ENCODE measurements at regions of chr5 and their contacts with region 1.

Region 1: DNA sequence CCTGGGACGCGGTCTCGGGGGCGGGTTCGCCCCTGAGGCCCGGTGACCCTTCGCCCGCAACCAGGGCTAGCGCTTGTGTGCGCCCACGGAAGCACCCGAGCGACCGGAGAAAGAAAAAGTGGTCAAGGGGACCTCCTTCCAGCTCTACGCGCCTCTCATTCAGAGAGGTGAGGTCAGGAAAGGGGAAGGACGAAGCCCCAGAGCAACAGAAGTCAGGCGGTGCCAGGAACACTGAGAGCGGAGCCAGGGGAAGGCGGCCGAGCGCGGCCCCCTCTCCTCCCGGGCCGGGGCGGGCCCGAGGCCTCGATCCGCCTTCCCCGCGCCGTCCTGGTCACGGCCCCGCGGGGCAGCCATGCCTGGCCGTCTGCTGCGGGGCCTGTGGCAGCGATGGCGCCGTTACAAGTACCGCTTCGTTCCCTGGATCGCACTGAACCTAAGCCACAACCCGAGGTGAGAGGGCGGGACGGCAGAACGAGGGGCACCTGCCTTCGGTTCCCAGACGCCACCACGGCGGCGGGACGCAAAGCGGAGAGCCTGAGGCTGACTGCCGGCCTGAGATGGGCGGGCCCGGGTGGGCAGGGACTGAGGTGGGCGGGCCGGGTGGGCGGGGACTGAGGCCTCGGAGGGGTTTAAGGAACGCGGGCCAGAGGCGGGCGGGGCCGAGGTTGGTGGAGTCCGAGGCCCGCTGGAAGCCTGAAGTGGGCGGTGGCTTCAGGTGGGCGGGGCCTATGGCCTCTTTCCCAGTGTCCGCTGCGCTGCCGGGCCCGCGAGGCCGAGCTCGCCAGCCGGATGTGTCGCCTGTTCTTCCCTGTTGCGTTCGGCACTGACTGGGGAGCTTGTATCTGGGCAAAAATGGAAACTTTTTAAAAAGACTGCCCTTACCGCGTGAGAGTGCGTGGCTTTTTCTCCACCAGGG is at the start of gene SETD9:
- DNase-seq: peak; percentile 99 to 100
- H3K4me3 ChIP-seq: peak within 1 kb of the TSS; percentile 54 to 63 (median 58)
- H3K27ac ChIP-seq: peak within 1 kb of the TSS; percentile 89 to 96 (median 94)
- H3K4me1 ChIP-seq: peaks cover 0 to 4% of the 10 kb centered on the region in 2 donors
- H3K27me3 ChIP-seq: no peaks in the 10 kb centered on the region
- CTCF ChIP-seq: no peak
- POLR2A ChIP-seq: peak in 1 of 2 donors; percentile 84
- total RNA-seq, gene SETD9: 11.2 to 20.3 (median 14.3) TPM

Region 2: DNA sequence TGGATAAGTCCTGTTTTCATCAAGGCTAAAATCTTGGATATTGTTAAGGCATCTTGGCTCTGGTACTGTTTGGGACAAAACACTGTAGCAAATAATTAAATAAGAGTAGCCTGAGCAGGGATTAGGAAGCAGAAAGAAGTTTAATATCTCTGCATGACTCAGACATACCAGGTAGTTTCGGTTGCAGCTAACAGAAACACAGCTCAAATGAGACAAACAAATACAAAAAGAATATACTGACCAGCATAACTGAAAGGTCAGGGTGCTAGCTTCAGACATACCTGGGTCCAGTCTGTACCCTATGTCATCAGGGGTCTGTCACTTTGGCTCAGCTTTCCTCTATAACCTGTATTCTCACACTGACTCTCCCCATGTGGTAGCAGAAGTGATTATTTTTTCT is 250.6 kb before region 1 on chr5:
- intact Hi-C with region 1: no loop called
- DNase-seq: no peak
- H3K4me3 ChIP-seq: no peak overlapping the region
- H3K27ac ChIP-seq: no peak overlapping the region
- H3K4me1 ChIP-seq: peaks cover 9 to 16% of the 10 kb centered on the region in 2 donors
- H3K27me3 ChIP-seq: no peaks in the 10 kb centered on the region
- CTCF ChIP-seq: no peak
- POLR2A ChIP-seq: no peak

Region 3: GRCh38 chr5:57173185-57174127 is 263.9 kb after region 1 on chr5 and contains the start of gene GPBP1:
- intact Hi-C with region 1: loop called (anchors 10 kb)
- DNase-seq: peak; percentile 99 to 100
- H3K4me3 ChIP-seq: peak within 1 kb of the TSS; percentile 89 to 95 (median 92)
- H3K27ac ChIP-seq: peak within 1 kb of the TSS; percentile 99 to 100 (median 99)
- H3K4me1 ChIP-seq: peaks cover 16 to 20% of the 10 kb centered on the region in 2 donors
- H3K27me3 ChIP-seq: no peaks in the 10 kb centered on the region
- CTCF ChIP-seq: no peak
- POLR2A ChIP-seq: peak in 1 of 2 donors; percentile 82
- total RNA-seq, gene GPBP1: 89.4 to 109 (median 99.4) TPM

Region 4: GRCh38 chr5:57221049-57221568 is 311.6 kb after region 1 on chr5:
- intact Hi-C with region 1: loop called (anchors 10 kb)
- DNase-seq: no peak
- H3K4me3 ChIP-seq: no peak overlapping the region
- H3K27ac ChIP-seq: no peak overlapping the region
- H3K4me1 ChIP-seq: peaks cover 0 to 4% of the 10 kb centered on the region in 2 donors
- H3K27me3 ChIP-seq: no peaks in the 10 kb centered on the region
- CTCF ChIP-seq: peak; percentile 78 to 97 (median 92)
- POLR2A ChIP-seq: no peak

Measured in thyroid gland (tissue), 4 donors.